Natural killer cell (primary cell): ENCODE measurements at regions of chr1 and their contacts with region 1.

Region 1: GRCh38 chr1:234772345-234773147 is 162.6 kb upstream of the IRF2BP2 start:
- DNase-seq: peak; percentile 79 to 94
- ATAC-seq: peak; percentile 86 to 92 (median 91)
- H3K4me3 ChIP-seq: peak overlapping the region; percentile 9
- H3K4me3 Mint-ChIP-seq: peak overlapping the region; percentile 84
- H3K27ac ChIP-seq: peak overlapping the region; percentile 94
- H3K27ac Mint-ChIP-seq: peak overlapping the region in 1 of 2 donors; percentile 99
- H3K4me1 ChIP-seq: peaks cover 71% of the 10 kb centered on the region
- H3K4me1 Mint-ChIP-seq: peaks cover 35 to 43% of the 10 kb centered on the region in 2 donors
- H3K27me3 ChIP-seq: peaks cover 6% of the 10 kb centered on the region
- H3K27me3 Mint-ChIP-seq: peaks cover 0 to 7% of the 10 kb centered on the region in 2 donors
- CTCF ChIP-seq: no peak

Region 2: GRCh38 chr1:234610348-234611152 is 162.0 kb before region 1 on chr1:
- intact Hi-C with region 1: loop called (anchors 1 kb)
- DNase-seq: peak; percentile 89 to 97
- ATAC-seq: peak; percentile 51 to 77 (median 64)
- H3K4me3 ChIP-seq: peak overlapping the region; percentile 92
- H3K4me3 Mint-ChIP-seq: peak overlapping the region; percentile 94
- H3K27ac ChIP-seq: peak overlapping the region; percentile 99
- H3K27ac Mint-ChIP-seq: peak overlapping the region; percentile 96 to 98
- H3K4me1 ChIP-seq: peaks cover 53% of the 10 kb centered on the region
- H3K4me1 Mint-ChIP-seq: peaks cover 59 to 60% of the 10 kb centered on the region in 2 donors
- H3K27me3 ChIP-seq: no peaks in the 10 kb centered on the region
- H3K27me3 Mint-ChIP-seq: no peaks in the 10 kb centered on the region
- CTCF ChIP-seq: no peak

Region 3: DNA sequence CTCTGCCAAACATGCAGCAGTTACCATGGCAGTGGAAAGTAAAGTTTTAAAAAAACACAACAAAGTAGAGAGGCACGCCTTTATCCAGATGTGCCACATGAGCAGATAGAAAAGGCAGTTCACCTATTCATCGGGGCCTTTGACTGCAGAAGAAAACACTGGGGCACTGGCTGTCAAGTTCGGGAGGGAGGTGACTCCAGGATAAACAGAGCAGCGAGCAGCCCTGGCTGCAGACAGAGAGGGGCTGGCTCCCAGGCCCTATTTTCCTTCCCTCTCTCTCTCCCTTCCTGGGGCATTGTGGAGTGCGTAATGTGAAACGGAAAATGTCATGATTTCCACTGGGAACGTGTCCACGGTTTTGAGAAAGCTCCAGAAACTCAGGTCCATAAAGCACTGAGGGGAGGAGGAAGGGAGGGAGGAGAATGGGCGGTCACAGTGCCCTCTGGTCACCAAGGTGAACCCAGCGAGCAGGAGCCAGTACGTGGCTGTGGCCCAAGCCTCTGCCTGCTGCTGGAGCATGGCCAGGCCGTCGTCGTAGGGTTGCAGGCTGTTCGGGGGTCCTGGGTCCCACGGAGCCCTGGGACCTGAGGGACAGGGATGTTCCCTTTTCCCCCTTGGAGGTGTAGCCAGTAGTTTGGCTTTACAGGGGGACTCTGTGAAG is 47.9 kb before region 1 on chr1:
- intact Hi-C with region 1: loop called (anchors 1 kb)
- DNase-seq: peak in 1 of 2 donors; percentile 60
- ATAC-seq: peak in 2 of 3 donors; percentile 27 to 30
- H3K4me3 ChIP-seq: peak overlapping the region; percentile 18
- H3K4me3 Mint-ChIP-seq: peak overlapping the region; percentile 87
- H3K27ac ChIP-seq: peak overlapping the region; percentile 90
- H3K27ac Mint-ChIP-seq: peak overlapping the region; percentile 91
- H3K4me1 ChIP-seq: peaks cover 52% of the 10 kb centered on the region
- H3K4me1 Mint-ChIP-seq: peaks cover 24 to 39% of the 10 kb centered on the region in 2 donors
- H3K27me3 ChIP-seq: no peaks in the 10 kb centered on the region
- H3K27me3 Mint-ChIP-seq: no peaks in the 10 kb centered on the region
- CTCF ChIP-seq: no peak

Region 4: GRCh38 chr1:234755449-234755863 is 17.1 kb before region 1 on chr1:
- intact Hi-C with region 1: loop called (anchors 2 kb)
- DNase-seq: no peak
- ATAC-seq: peak in 1 of 3 donors; percentile 45
- H3K4me3 ChIP-seq: no peak overlapping the region
- H3K4me3 Mint-ChIP-seq: no peak overlapping the region
- H3K27ac ChIP-seq: no peak overlapping the region
- H3K27ac Mint-ChIP-seq: no peak overlapping the region
- H3K4me1 ChIP-seq: peaks cover 25% of the 10 kb centered on the region
- H3K4me1 Mint-ChIP-seq: peaks cover 9 to 26% of the 10 kb centered on the region in 2 donors
- H3K27me3 ChIP-seq: no peaks in the 10 kb centered on the region
- H3K27me3 Mint-ChIP-seq: peaks cover 13 to 32% of the 10 kb centered on the region in 2 donors
- CTCF ChIP-seq: no peak

Region 5: DNA sequence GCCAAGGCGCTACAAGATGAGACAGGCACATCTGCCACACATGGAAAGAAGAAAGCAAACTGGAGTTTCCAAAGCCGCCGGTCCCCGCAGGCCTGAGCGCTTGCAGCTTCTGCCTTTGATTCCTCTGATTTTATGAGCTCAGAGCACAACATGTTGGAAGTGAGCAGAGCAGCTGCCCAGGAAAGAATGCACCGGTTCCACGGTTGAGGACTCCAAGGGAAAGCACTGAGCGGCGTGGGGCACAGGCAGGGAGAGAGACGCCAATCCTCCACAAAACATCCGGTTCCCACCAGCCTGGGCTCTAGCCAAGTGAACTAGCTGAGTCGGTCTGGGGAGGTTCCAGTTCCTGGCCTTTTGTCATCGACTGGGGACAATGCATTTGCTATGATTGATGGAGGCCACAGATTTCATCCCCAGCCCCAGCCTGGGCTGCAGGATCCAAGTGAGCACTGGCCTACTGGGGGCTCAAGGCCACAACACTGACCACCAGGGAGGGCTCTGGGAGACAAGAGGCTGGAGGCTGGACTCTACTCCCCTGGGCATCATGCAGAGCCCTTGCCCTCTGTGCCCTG is 90.5 kb after region 1 on chr1:
- intact Hi-C with region 1: loop called (anchors 10 kb)
- DNase-seq: no peak
- ATAC-seq: no peak
- H3K4me3 ChIP-seq: no peak overlapping the region
- H3K4me3 Mint-ChIP-seq: no peak overlapping the region
- H3K27ac ChIP-seq: no peak overlapping the region
- H3K27ac Mint-ChIP-seq: peak overlapping the region in 1 of 2 donors; percentile 24
- H3K4me1 ChIP-seq: peaks cover 24% of the 10 kb centered on the region
- H3K4me1 Mint-ChIP-seq: peaks cover 19 to 23% of the 10 kb centered on the region in 2 donors
- H3K27me3 ChIP-seq: no peaks in the 10 kb centered on the region
- H3K27me3 Mint-ChIP-seq: peaks cover 5 to 10% of the 10 kb centered on the region in 2 donors
- CTCF ChIP-seq: no peak

Region 6: DNA sequence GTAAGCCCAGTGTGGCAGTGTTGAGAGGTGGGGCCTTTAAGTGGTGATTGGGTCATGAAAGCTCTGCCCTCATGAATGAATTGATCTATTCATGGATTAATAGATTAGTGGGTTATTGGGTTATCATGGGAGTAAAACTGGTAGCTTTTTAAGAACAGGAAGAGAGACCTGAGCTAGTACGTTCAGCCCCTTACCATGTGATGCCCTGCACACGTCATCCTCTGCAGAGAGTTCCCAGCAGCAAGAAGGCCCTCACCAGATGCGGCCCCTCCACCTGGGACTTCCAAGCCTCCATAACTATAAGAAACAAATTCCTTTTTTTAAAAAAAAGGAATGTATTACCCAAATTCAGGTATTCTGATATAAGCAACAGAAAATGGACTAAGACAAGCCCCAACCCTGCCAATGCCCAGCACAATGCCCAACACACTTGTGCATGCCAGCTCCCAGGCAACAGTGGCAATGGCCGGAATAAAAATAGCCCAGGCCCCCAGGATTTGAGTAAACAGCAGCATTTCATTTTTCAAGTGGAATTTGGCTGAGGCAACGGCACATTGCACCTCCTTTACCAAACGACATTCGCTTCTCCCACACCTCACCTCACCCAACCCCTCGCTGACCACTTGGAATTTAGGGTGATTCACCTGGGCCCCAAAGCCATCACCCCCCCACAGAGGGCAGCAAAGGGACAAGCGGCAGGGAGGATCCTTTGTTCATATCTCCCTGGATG is 140.2 kb after region 1 on chr1:
- intact Hi-C with region 1: loop called (anchors 1 kb)
- DNase-seq: peak in 1 of 2 donors; percentile 59
- ATAC-seq: peak in 1 of 3 donors; percentile 30
- H3K4me3 ChIP-seq: no peak overlapping the region
- H3K4me3 Mint-ChIP-seq: peak overlapping the region; percentile 55
- H3K27ac ChIP-seq: peak overlapping the region; percentile 64
- H3K27ac Mint-ChIP-seq: peak overlapping the region; percentile 79 to 94
- H3K4me1 ChIP-seq: peaks cover 30% of the 10 kb centered on the region
- H3K4me1 Mint-ChIP-seq: peaks cover 45 to 51% of the 10 kb centered on the region in 2 donors
- H3K27me3 ChIP-seq: no peaks in the 10 kb centered on the region
- H3K27me3 Mint-ChIP-seq: no peaks in the 10 kb centered on the region
- CTCF ChIP-seq: no peak

Region 7: GRCh38 chr1:235006132-235006943 is 233.8 kb after region 1 on chr1:
- intact Hi-C with region 1: no loop called
- DNase-seq: no peak
- ATAC-seq: peak; percentile 53 to 75 (median 63)
- H3K4me3 ChIP-seq: no peak overlapping the region
- H3K4me3 Mint-ChIP-seq: no peak overlapping the region
- H3K27ac ChIP-seq: no peak overlapping the region
- H3K27ac Mint-ChIP-seq: peak overlapping the region; percentile 8 to 12
- H3K4me1 ChIP-seq: peaks cover 10% of the 10 kb centered on the region
- H3K4me1 Mint-ChIP-seq: peaks cover 24 to 29% of the 10 kb centered on the region in 2 donors
- H3K27me3 ChIP-seq: no peaks in the 10 kb centered on the region
- H3K27me3 Mint-ChIP-seq: no peaks in the 10 kb centered on the region
- CTCF ChIP-seq: no peak